Ovary (tissue), 10 donors: ENCODE measurements at regions of chr20 and their contacts with region 1.

Region 1: DNA sequence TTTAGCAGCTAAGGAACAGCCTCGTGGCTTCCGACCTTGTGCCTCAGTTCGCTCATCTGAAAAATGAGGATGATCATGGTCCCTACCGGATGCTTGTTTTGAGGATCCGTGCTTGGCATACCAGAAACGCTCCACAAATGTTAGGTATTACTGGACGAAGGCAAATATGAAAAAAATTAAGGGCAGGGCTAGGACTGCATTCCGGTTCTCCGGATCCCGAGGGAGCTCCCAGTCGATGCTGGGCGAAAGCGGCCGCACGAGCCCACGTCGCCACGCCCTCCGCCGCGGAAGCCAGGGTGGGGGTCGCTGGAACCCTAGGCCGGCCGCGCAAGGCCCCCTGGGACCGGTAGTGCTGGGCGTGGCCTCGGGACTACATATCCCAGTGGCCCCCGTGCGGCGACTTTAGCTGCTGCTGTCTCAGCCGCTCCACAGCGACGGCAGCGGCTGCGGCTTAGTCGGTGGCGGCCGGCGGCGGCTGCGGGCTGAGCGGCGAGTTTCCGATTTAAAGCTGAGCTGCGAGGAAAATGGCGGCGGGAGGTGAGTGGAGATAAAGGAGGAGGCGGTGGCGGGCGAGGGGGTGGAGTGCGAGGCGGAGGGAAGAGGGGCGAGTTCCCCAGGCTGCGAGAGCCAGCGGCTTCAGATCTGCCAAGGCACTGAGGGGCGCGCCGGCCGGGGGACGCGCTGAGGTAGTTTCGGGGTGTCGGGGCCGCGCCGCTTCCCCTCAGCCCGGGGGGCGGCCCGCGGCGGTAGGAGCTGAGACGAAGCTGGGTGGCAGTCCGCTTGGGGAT is at the start of gene NCOA3:
- DNase-seq: peak; percentile 90 to 95 (median 94)
- H3K4me3 ChIP-seq: peak within 1 kb of the TSS; percentile 99
- H3K27ac ChIP-seq: peak within 1 kb of the TSS; percentile 78 to 85
- H3K4me1 ChIP-seq: peaks cover 2% of the 10 kb centered on the region
- H3K27me3 ChIP-seq: no peaks in the 10 kb centered on the region
- CTCF ChIP-seq: peak; percentile 57 to 80 (median 80)
- EP300 ChIP-seq: no peak
- POLR2A ChIP-seq: peak; percentile 91
- total RNA-seq, gene NCOA3: 19.9 to 32.4 (median 26.5) TPM

Region 2: GRCh38 chr20:47535088-47535487 is 33.4 kb after region 1 on chr20:
- intact Hi-C with region 1: no loop called
- DNase-seq: no peak
- H3K4me3 ChIP-seq: no peak overlapping the region
- H3K27ac ChIP-seq: no peak overlapping the region
- H3K4me1 ChIP-seq: peaks cover 1% of the 10 kb centered on the region
- H3K27me3 ChIP-seq: no peaks in the 10 kb centered on the region
- CTCF ChIP-seq: no peak
- EP300 ChIP-seq: no peak
- POLR2A ChIP-seq: no peak

Region 3: GRCh38 chr20:47576516-47577033 is 74.9 kb after region 1 on chr20:
- intact Hi-C with region 1: loop called in 2 of 4 experiments (anchors 5 to 10 kb)
- DNase-seq: peak; percentile 47 to 61 (median 54)
- H3K4me3 ChIP-seq: no peak overlapping the region
- H3K27ac ChIP-seq: peak overlapping the region in 1 of 2 donors; percentile 60
- H3K4me1 ChIP-seq: peaks cover 6% of the 10 kb centered on the region
- H3K27me3 ChIP-seq: no peaks in the 10 kb centered on the region
- CTCF ChIP-seq: no peak
- EP300 ChIP-seq: no peak
- POLR2A ChIP-seq: no peak